ENCODE measurements at regions of chr10 and their contacts with region 1.

Region 1: GRCh38 chr10:71569775-71570588 is 149.6 kb downstream of the C10orf105 start:
- DNase-seq: peak; percentile 59 to 98
- H3K4me3 ChIP-seq: no peak overlapping the region
- H3K27ac ChIP-seq: no peak overlapping the region
- H3K4me1 ChIP-seq: peaks cover 3 to 11% (median 6%) of the 10 kb centered on the region in 4 experiments; a peak in 5 of 7 replicates
- H3K27me3 ChIP-seq: 0 out of 7 replicates have a peak, but pooled peaks cover 0 to 2% (median 0%) of the 10 kb centered on the region in 4 experiments
- CTCF ChIP-seq: peak; percentile 74 to 93 (median 89)
- EP300 ChIP-seq: no peak
- POLR2A ChIP-seq: no peak
- RAD21 ChIP-seq: peak; percentile 87 to 93

Region 2: DNA sequence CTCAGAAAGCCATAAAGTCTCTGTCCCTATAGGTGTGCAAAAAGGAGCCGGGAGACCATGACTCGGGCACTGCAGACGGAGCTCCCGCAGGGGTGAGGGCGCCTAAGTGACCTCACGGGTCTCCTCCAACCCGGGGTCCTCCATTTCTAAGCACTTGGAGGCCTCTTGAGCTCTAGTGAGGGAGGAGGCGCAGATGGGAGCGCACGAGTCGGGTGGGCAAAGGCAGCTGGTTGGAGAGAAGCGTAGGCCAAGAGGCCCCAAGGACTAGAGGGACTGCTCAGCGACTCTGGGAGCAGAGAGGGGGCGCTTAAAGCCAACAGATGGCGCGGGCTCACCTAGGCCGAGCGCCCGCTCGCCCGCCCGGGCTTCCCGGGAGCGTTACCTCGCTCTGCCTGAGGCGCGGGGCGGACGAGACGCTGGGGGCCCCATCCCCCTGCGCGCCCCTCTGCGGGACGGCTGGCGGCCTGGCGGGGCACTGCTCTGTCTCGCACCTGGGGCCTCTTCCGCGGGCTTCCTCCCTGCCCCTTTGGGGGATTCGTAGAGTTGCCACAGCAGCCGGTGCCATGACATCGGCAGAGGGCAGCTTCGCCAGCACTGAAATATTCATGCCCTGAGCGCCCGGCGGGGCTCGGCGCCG is 173.8 kb before region 1 on chr10:
- CTCF ChIA-PET with region 1: interaction called, 52 read pairs
- POLR2A ChIA-PET with region 1: no interaction called
- DNase-seq: peak; percentile 60 to 79
- H3K4me3 ChIP-seq: peak overlapping the region; percentile 54 to 86 (median 62)
- H3K27ac ChIP-seq: no peak overlapping the region
- H3K4me1 ChIP-seq: peaks cover 0 to 18% (median 10%) of the 10 kb centered on the region in 4 experiments; a peak in 6 of 7 replicates
- H3K27me3 ChIP-seq: peaks cover 15 to 50% (median 40%) of the 10 kb centered on the region in 4 experiments
- CTCF ChIP-seq: peak; percentile 55 to 84 (median 71)
- EP300 ChIP-seq: no peak
- POLR2A ChIP-seq: no peak
- RAD21 ChIP-seq: peak; percentile 84 to 88

Region 3: DNA sequence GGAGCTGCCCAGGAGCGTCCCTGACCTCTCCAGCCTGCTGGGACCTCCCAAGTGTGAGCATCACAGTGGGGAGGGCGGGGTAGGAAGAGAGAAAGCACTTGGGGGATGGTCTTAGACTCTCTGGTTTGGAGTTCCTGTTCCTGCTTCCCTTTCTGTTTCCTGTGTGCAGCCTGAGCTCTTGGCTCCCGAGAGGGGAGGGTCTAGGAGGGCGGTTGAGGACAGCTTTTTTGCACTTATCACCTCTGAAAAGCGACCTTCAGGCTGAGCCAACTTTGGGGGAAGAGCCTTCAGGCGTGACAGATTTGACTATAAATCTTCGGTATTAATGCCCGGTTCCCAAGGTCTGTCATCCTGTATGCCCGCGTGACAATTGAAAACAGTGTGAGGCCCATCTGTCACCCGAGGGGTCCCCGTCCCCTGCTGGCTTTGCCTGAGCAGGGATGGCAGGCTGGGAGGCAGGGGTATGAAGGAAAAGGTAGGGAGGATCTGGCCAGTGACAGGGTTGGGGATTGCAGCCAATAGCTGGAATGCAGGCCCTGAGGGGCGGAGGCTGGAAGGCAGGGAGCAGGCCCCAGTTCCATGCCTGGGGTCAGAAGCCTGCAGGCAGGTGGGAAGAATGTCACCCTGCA is 94.6 kb before region 1 on chr10:
- CTCF ChIA-PET with region 1: interaction called, 10 read pairs
- POLR2A ChIA-PET with region 1: no interaction called
- DNase-seq: no peak
- H3K4me3 ChIP-seq: no peak overlapping the region
- H3K27ac ChIP-seq: no peak overlapping the region
- H3K4me1 ChIP-seq: peaks cover 0 to 14% (median 6%) of the 10 kb centered on the region in 4 experiments; a peak in 6 of 7 replicates
- H3K27me3 ChIP-seq: no peaks in the 10 kb centered on the region
- CTCF ChIP-seq: peak in 1 of 3 experiments; percentile 2; a peak in 1 of 4 replicates
- EP300 ChIP-seq: no peak
- POLR2A ChIP-seq: no peak; a peak in 1 of 3 replicates
- RAD21 ChIP-seq: no peak

Region 4: DNA sequence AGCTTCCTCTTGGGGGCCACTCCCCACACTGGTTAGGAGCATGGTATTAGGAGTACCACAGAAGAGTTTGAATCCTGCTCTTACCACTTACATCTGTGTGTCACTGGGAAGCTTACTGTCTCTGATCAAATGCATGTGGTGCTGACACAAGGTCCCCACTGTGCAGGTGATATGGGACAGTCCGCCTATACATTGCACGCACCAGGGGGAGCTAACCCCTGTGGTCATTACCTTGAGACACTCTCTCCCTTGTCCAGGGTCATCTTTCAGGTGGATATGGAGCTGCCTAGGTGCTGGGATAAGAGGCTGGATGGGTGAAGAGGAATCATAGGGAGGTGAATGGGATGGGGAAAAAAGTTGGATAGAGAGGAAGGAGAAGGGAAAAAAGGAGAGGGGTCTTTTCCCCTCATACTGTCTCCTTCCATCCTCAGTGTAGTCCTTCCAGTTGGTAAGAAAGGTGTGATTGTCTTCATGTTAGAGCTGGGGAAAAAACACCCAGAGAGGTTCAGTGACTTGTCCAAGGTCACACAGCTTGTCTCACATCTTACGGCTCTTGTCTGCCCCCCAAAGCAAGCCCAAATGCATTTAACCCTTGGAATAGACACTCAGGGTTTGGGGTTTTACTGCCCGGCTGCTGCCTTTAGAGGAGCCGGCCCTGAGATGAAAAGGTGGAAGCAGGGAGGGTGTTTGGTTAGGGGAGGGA is 47.4 kb before region 1 on chr10:
- CTCF ChIA-PET with region 1: interaction called, 71 read pairs
- POLR2A ChIA-PET with region 1: no interaction called
- DNase-seq: no peak
- H3K4me3 ChIP-seq: no peak overlapping the region
- H3K27ac ChIP-seq: no peak overlapping the region
- H3K4me1 ChIP-seq: peaks cover 0 to 3% (median 0%) of the 10 kb centered on the region in 4 experiments; a peak in 3 of 7 replicates
- H3K27me3 ChIP-seq: no peaks in the 10 kb centered on the region; a peak in 2 of 7 replicates
- CTCF ChIP-seq: peak; percentile 24 to 41 (median 37); a peak in 3 of 4 replicates
- EP300 ChIP-seq: no peak
- POLR2A ChIP-seq: no peak
- RAD21 ChIP-seq: peak; percentile 24 to 39; a peak in 3 of 4 replicates

Region 5: DNA sequence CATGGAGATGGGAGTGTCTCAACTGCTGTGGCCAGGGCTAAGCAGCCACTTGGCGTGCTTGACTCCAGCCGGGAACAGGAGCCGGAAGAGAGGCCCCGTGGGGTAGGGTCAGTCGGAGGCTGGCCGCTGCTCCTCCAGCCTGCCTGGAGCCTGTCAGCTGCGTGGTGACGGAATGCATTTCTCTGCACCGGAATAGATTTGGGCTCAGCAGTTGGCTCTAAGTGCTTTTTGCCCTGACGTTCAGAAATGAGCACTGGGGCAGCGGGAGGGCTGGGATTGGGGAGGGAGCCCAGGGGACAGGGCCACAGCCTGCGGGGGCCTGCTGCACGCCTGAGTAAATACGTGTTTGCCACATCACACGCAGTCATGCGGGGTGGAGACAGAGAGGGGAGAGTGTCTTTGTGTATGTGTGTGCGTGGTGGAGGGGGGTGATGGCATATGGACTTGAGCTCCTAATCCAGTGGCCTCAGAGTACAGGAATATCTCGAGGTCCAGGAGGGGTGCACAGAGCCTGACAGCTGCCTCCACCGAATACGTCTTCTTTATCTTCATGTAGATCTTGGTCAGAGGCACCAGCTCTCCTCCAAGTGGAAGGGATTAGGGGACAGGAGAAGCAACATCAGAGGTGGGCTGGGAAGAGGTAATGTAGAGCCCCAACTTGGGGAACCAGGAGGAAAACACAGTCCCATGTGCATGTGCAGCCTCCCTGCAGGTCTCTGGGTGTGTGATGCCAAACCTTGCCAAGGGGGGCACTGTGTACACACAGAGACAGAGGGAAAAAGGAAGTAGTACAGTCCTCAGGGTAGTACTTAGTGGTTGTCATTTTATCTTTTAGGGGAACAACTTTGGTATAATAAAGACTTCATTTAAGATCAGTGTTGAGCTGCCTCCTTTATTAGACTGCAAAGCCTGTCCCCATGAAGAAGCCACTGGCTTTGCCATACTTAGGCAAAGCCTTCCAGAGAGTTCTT is 21.8 kb before region 1 on chr10:
- CTCF ChIA-PET with region 1: interaction called, 168 read pairs
- POLR2A ChIA-PET with region 1: no interaction called
- DNase-seq: peak in 1 of 2 experiments; percentile 75
- H3K4me3 ChIP-seq: no peak overlapping the region
- H3K27ac ChIP-seq: no peak overlapping the region
- H3K4me1 ChIP-seq: peaks cover 2 to 33% (median 17%) of the 10 kb centered on the region in 4 experiments
- H3K27me3 ChIP-seq: no peaks in the 10 kb centered on the region
- CTCF ChIP-seq: peak; percentile 57 to 71 (median 65)
- EP300 ChIP-seq: no peak
- POLR2A ChIP-seq: no peak
- RAD21 ChIP-seq: peak; percentile 26 to 51; a peak in 3 of 4 replicates

Region 6: GRCh38 chr10:71608819-71609768 is 39.1 kb after region 1 on chr10:
- CTCF ChIA-PET with region 1: interaction called, 80 read pairs
- POLR2A ChIA-PET with region 1: no interaction called
- DNase-seq: peak; percentile 67 to 92
- H3K4me3 ChIP-seq: no peak overlapping the region
- H3K27ac ChIP-seq: no peak overlapping the region
- H3K4me1 ChIP-seq: peaks cover 6 to 18% (median 17%) of the 10 kb centered on the region in 4 experiments
- H3K27me3 ChIP-seq: no peaks in the 10 kb centered on the region
- CTCF ChIP-seq: peak; percentile 85 to 95 (median 91)
- EP300 ChIP-seq: no peak
- POLR2A ChIP-seq: no peak
- RAD21 ChIP-seq: peak; percentile 85 to 90

Region 7: DNA sequence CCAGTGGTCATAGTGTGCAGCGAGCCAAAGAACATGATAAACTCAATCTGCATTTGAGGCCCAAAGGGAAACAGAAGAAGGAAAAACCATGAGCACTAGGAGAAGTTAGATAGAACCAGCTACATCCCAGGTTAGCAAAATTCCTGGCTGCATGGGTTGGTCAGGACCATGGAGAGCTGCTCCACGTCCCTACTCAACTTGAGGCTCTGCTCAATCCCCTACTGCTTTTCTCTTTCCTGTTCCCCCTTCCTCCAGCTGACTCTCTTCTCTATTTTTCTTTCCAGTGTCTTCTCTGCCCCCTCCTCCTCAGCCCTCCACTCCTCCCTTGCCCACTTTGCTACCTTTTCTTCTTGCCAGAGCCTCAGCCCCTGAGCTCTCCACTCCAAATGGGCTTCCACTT is 225.3 kb after region 1 on chr10:
- CTCF ChIA-PET with region 1: no interaction called
- POLR2A ChIA-PET with region 1: no interaction called
- DNase-seq: peak in 1 of 2 experiments; percentile 72
- H3K4me3 ChIP-seq: no peak overlapping the region
- H3K27ac ChIP-seq: no peak overlapping the region
- H3K4me1 ChIP-seq: no peaks in the 10 kb centered on the region
- H3K27me3 ChIP-seq: no peaks in the 10 kb centered on the region
- CTCF ChIP-seq: no peak
- EP300 ChIP-seq: no peak
- POLR2A ChIP-seq: no peak
- RAD21 ChIP-seq: no peak

Region 8: GRCh38 chr10:72107325-72108003 is 537.5 kb after region 1 on chr10:
- CTCF ChIA-PET with region 1: no interaction called
- POLR2A ChIA-PET with region 1: no interaction called
- DNase-seq: no peak
- H3K4me3 ChIP-seq: no peak overlapping the region
- H3K27ac ChIP-seq: no peak overlapping the region
- H3K4me1 ChIP-seq: no peaks in the 10 kb centered on the region
- H3K27me3 ChIP-seq: no peaks in the 10 kb centered on the region
- CTCF ChIP-seq: no peak
- EP300 ChIP-seq: no peak
- POLR2A ChIP-seq: no peak
- RAD21 ChIP-seq: no peak

Measured in H1 (cell line).